ENCODE measurements at regions of chr22 and their contacts with region 1.

Region 1: DNA sequence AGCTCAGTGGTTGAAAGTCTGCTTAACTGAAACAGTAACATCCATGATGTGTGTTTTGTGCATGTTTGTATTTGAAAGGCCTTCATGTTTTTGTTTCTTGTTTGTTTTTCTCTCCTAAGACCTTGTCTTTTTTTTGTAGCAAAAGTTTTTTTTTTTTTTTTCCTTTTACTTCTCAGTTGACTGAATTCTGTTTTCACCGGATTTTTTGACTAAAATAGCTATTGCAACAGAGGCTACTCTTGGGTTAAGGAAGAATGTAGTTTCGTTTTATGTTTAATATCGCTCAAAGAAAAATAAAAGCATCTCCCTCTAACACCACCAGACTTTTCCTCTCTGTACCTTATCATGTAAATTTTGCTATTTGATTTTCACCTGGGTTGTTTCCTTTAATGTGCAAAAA is 15.1 kb downstream of the APOL6 start:
- DNase-seq: no peak
- ATAC-seq: no peak
- H3K4me3 ChIP-seq: no peak overlapping the region
- H3K27ac ChIP-seq: no peak overlapping the region
- H3K4me1 ChIP-seq: peaks cover 3% of the 10 kb centered on the region; the same call in 1 of the 2 replicates
- H3K27me3 ChIP-seq: no peaks in the 10 kb centered on the region
- CTCF ChIP-seq: no peak
- EP300 ChIP-seq: no peak
- POLR2A ChIP-seq: no peak
- RAD21 ChIP-seq: no peak

Region 2: DNA sequence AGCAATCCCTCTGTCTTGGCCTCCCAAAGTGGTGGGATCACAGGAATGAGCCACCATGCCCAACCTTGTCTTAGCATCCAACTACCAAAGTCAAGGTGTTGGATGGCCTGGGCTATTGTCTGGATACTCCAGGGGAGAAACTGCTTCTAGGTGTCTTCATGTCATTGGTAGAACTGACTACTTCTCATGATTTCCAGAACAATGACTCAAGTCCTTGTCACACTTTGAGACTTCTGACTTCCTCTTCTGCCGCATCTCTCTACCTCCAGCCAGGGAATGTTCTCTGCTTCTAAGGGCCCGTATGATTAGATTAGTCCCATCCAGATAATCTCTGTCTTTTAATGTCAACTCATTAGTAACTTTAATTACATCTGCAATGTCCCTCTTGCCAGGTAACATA is 15.5 kb after region 1 on chr22:
- CTCF ChIA-PET with region 1: interaction called, 11 read pairs
- POLR2A ChIA-PET with region 1: no interaction called
- RAD21 ChIA-PET with region 1: no interaction called
- SMC1A ChIA-PET with region 1: interaction called, 3 read pairs
- in situ Hi-C with region 1: no loop called
- intact Hi-C with region 1: no loop called
- DNase-seq: no peak
- ATAC-seq: no peak
- H3K4me3 ChIP-seq: no peak overlapping the region
- H3K27ac ChIP-seq: no peak overlapping the region
- H3K4me1 ChIP-seq: no peaks in the 10 kb centered on the region
- H3K27me3 ChIP-seq: no peaks in the 10 kb centered on the region
- CTCF ChIP-seq: no peak
- EP300 ChIP-seq: no peak
- POLR2A ChIP-seq: no peak
- RAD21 ChIP-seq: no peak

Region 3: GRCh38 chr22:35739076-35739930 is 75.9 kb after region 1 on chr22:
- CTCF ChIA-PET with region 1: no interaction called
- POLR2A ChIA-PET with region 1: no interaction called
- RAD21 ChIA-PET with region 1: no interaction called
- SMC1A ChIA-PET with region 1: no interaction called
- in situ Hi-C with region 1: no loop called
- intact Hi-C with region 1: no loop called
- DNase-seq: no peak
- ATAC-seq: peak; percentile 55
- H3K4me3 ChIP-seq: no peak overlapping the region
- H3K27ac ChIP-seq: no peak overlapping the region
- H3K4me1 ChIP-seq: no peaks in the 10 kb centered on the region
- H3K27me3 ChIP-seq: peaks cover 0 to 6% of the 10 kb centered on the region in 2 experiments
- CTCF ChIP-seq: no peak; a peak in 1 of 6 replicates
- EP300 ChIP-seq: no peak
- POLR2A ChIP-seq: no peak
- RAD21 ChIP-seq: no peak

Region 4: GRCh38 chr22:35883031-35883620 is 219.8 kb after region 1 on chr22:
- CTCF ChIA-PET with region 1: no interaction called
- POLR2A ChIA-PET with region 1: no interaction called
- RAD21 ChIA-PET with region 1: no interaction called
- SMC1A ChIA-PET with region 1: no interaction called
- in situ Hi-C with region 1: no loop called
- intact Hi-C with region 1: no loop called
- DNase-seq: no peak
- ATAC-seq: no peak
- H3K4me3 ChIP-seq: no peak overlapping the region
- H3K27ac ChIP-seq: no peak overlapping the region
- H3K4me1 ChIP-seq: no peaks in the 10 kb centered on the region
- H3K27me3 ChIP-seq: no peaks in the 10 kb centered on the region; a peak in 1 of 4 replicates
- CTCF ChIP-seq: no peak
- EP300 ChIP-seq: no peak
- POLR2A ChIP-seq: no peak
- RAD21 ChIP-seq: no peak

Measured in GM12878 (cell line).